ENCODE measurements at regions of chr9 and their contacts with region 1.

Region 1: DNA sequence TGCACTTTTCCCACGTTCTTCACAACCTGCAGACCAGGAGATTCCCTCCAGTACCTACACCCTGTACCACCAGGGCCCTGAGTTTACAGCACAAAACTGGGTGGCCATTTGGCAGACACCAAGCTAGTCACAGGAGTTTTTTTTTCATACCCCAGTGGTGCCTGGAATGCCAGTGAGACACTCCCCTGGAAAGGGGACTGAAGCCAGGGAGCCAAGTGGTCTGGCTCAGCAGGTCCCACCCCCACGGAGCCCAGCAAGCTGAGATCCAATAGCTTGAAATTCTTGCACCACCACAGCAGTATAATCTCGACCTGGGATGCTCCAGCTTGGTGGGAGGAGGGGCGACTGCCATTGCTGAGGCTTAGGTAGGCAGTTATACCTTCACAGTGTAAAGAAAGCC is 26.3 kb upstream of the SMC5 start:
- DNase-seq: no peak
- H3K4me3 ChIP-seq: no peak overlapping the region
- H3K4me1 ChIP-seq: no peaks in the 10 kb centered on the region
- H3K27me3 ChIP-seq: no peaks in the 10 kb centered on the region

Region 2: DNA sequence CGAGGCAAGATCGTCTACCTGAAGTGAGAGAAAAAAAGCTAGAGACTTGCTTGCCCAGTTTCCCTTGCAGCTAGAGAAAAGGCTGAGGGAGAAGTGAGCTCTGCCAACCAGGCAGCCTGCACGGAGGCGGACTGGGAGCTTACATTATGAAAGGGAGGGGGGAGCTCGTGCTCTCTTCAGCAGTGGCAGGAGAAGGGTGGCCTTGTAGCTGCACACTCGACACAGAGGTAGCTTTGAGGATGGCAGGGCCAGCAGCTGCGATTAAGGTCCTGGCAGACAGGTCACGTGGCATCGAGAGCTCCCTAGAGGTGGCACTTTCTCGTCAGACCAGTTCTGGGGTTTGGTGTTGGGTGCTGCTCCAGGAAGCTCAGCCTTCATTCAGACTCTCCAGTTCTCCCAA is 587.0 kb before region 1 on chr9:
- in situ Hi-C with region 1: no loop called
- DNase-seq: no peak
- H3K4me3 ChIP-seq: no peak overlapping the region
- H3K4me1 ChIP-seq: peaks cover 22% of the 10 kb centered on the region
- H3K27me3 ChIP-seq: no peaks in the 10 kb centered on the region

Region 3: DNA sequence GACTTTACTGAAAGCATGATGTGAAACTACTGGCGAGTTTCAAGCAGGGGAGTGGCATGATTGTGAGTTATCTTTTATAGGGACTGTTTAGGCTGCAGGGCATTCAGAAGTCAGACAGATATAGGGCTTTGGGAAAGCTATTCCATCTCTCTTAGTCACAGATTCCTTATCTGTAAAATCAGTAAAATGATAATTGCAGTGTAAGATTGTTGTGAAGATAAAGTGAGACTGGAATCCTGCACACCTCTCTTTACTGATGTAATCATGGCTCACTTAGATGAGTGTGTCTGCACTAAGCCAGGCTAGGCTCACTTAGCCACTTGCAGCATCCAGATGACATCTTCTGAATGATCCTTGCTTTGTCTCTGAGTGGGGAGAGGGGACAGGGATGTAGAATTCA is 270.6 kb before region 1 on chr9:
- in situ Hi-C with region 1: loop called (anchors 10 kb)
- DNase-seq: peak; percentile 17 to 42
- H3K4me3 ChIP-seq: no peak overlapping the region
- H3K4me1 ChIP-seq: peaks cover 38% of the 10 kb centered on the region
- H3K27me3 ChIP-seq: no peaks in the 10 kb centered on the region